H1 (cell line): ENCODE measurements at regions of chr20 and their contacts with region 1.

Region 1: GRCh38 chr20:40741507-40742106 is 52.6 kb upstream of the MAFB start:
- DNase-seq: peak; percentile 34 to 76
- H3K4me3 ChIP-seq: no peak overlapping the region
- H3K27ac ChIP-seq: no peak overlapping the region
- H3K4me1 ChIP-seq: peaks cover 0 to 3% (median 1%) of the 10 kb centered on the region in 4 experiments; a peak in 2 of 7 replicates
- H3K27me3 ChIP-seq: no peaks in the 10 kb centered on the region
- CTCF ChIP-seq: peak; percentile 70 to 86 (median 78)
- EP300 ChIP-seq: no peak
- POLR2A ChIP-seq: no peak
- RAD21 ChIP-seq: peak; percentile 61 to 71

Region 2: GRCh38 chr20:40706977-40707582 is 34.5 kb before region 1 on chr20:
- CTCF ChIA-PET with region 1: interaction called, 43 read pairs
- POLR2A ChIA-PET with region 1: no interaction called
- DNase-seq: peak in 1 of 2 experiments; percentile 59
- H3K4me3 ChIP-seq: no peak overlapping the region
- H3K27ac ChIP-seq: no peak overlapping the region
- H3K4me1 ChIP-seq: peaks cover 0 to 3% (median 0%) of the 10 kb centered on the region in 4 experiments; a peak in 1 of 7 replicates
- H3K27me3 ChIP-seq: no peaks in the 10 kb centered on the region
- CTCF ChIP-seq: peak; percentile 69 to 90 (median 74)
- EP300 ChIP-seq: no peak
- POLR2A ChIP-seq: no peak
- RAD21 ChIP-seq: peak; percentile 54 to 63

Region 3: DNA sequence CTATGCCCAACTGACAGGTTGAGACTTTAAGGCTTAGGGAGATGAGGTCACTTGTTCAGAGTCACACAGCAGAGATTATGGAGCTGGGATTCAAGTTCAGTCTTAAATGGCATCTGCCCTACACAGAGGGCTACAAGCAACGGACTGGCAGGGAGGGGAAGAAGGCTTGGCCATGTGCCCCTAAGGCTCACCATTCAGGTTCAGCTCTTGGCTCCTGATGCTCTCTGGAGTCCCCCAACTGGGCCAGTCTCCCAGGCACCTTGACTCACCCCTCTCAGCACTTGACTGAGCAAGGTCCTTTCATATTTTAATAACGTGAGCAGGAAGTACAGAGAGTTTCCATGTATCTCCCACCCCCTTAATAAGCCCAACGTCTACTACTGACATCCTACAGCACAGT is 18.8 kb after region 1 on chr20:
- CTCF ChIA-PET with region 1: interaction called, 20 read pairs
- POLR2A ChIA-PET with region 1: no interaction called
- DNase-seq: no peak
- H3K4me3 ChIP-seq: no peak overlapping the region
- H3K27ac ChIP-seq: no peak overlapping the region
- H3K4me1 ChIP-seq: peaks cover 2 to 4% (median 3%) of the 10 kb centered on the region in 4 experiments; a peak in 4 of 7 replicates
- H3K27me3 ChIP-seq: no peaks in the 10 kb centered on the region
- CTCF ChIP-seq: no peak
- EP300 ChIP-seq: no peak
- POLR2A ChIP-seq: no peak
- RAD21 ChIP-seq: no peak

Region 4: GRCh38 chr20:40797425-40797824 is 55.8 kb after region 1 on chr20:
- CTCF ChIA-PET with region 1: interaction called, 17 read pairs
- POLR2A ChIA-PET with region 1: no interaction called
- DNase-seq: no peak
- H3K4me3 ChIP-seq: no peak overlapping the region
- H3K27ac ChIP-seq: no peak overlapping the region
- H3K4me1 ChIP-seq: no peaks in the 10 kb centered on the region
- H3K27me3 ChIP-seq: no peaks in the 10 kb centered on the region
- CTCF ChIP-seq: peak in 2 of 3 experiments; percentile 69 to 71; a peak in 3 of 4 replicates
- EP300 ChIP-seq: no peak
- POLR2A ChIP-seq: no peak
- RAD21 ChIP-seq: peak; percentile 64 to 69

Region 5: DNA sequence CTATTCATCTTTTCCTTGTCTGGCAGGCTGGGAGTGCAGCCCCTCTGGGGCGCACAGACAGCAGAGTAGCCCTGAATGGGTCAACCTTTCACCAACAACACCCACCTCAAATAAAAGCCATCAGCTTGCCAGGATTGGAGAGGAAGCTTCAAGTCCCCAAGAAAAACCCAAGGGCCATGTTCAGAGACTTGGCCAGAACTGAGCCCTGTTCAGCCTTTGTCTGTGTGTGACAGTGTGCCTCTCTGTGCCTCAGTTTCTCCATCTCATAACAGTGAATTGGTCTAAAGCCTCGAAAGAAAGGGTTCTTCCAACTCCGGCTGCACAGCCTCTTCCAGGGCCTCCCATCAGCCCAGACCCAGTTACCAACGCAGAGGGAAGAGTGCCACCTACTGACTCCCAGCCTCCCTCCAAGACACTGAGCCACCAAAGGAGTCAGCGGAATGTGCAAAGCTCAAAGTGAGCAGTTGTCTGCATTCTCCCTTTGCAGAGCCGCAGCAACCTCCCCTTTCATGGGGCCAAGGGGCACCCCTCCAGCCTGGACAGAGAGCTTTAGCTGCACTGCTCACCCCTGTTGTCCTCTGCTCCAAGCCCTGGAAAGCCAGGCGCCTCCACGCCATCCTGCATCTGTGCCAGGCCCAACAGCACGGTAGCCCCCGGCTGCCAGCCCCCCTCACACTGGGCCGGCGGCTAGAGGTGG is 204.3 kb after region 1 on chr20:
- CTCF ChIA-PET with region 1: interaction called, 27 read pairs
- POLR2A ChIA-PET with region 1: no interaction called
- DNase-seq: peak; percentile 36 to 76
- H3K4me3 ChIP-seq: no peak overlapping the region
- H3K27ac ChIP-seq: no peak overlapping the region
- H3K4me1 ChIP-seq: peaks cover 0 to 3% (median 2%) of the 10 kb centered on the region in 4 experiments; a peak in 3 of 7 replicates
- H3K27me3 ChIP-seq: no peaks in the 10 kb centered on the region; a peak in 2 of 7 replicates
- CTCF ChIP-seq: peak; percentile 86 to 98 (median 90)
- EP300 ChIP-seq: no peak
- POLR2A ChIP-seq: no peak
- RAD21 ChIP-seq: peak; percentile 96 to 97